Activated CD4-positive, alpha-beta T cell treated with anti-CD3 and anti-CD28 coated beads for 36 hours (primary cell): ENCODE measurements at regions of chr3 and their contacts with region 1.

Region 1: DNA sequence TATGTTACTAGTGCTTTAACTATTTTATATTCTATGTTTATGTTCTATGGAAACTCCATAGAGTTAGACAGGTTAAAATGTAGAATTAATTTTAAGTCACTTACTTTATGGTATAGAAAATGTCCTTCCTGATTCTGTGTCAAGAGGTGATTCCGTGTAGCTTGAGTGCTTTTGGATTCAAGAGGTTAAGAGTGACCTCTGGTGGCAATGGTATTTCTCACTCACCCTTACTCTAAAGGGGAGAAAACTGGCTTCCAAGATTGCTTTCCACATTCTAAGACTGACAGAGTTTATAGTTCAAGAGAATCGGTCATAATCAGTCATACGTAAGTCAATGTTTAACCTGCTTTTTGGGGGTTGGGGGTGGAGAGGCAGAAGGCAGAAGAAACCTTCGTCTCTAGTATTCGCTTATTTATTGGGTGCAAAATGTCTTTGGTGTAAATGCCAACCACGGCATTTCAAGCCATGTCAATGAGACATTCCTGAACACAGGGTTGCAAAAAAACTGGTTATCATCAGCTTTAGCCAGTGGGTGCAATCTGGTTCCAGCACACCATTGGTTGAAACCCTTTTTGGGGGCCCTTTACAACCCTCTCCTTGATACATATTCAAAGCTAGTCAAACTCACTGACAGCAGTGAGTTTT is 92.0 kb upstream of the VGLL3 start:
- DNase-seq: no peak
- ATAC-seq: no peak
- H3K4me3 Mint-ChIP-seq: no peak overlapping the region
- H3K27ac Mint-ChIP-seq: no peak overlapping the region
- H3K4me1 Mint-ChIP-seq: peaks cover 4% of the 10 kb centered on the region
- H3K27me3 Mint-ChIP-seq: no peaks in the 10 kb centered on the region

Region 2: GRCh38 chr3:86702381-86702958 is 380.4 kb before region 1 on chr3:
- CTCF ChIA-PET with region 1: no interaction called
- POLR2A ChIA-PET with region 1: no interaction called
- intact Hi-C with region 1: loop called in 1 of 2 experiments (anchors 5 kb)
- DNase-seq: no peak
- ATAC-seq: no peak
- H3K4me3 Mint-ChIP-seq: no peak overlapping the region
- H3K27ac Mint-ChIP-seq: no peak overlapping the region
- H3K4me1 Mint-ChIP-seq: no peaks in the 10 kb centered on the region
- H3K27me3 Mint-ChIP-seq: no peaks in the 10 kb centered on the region

Region 3: DNA sequence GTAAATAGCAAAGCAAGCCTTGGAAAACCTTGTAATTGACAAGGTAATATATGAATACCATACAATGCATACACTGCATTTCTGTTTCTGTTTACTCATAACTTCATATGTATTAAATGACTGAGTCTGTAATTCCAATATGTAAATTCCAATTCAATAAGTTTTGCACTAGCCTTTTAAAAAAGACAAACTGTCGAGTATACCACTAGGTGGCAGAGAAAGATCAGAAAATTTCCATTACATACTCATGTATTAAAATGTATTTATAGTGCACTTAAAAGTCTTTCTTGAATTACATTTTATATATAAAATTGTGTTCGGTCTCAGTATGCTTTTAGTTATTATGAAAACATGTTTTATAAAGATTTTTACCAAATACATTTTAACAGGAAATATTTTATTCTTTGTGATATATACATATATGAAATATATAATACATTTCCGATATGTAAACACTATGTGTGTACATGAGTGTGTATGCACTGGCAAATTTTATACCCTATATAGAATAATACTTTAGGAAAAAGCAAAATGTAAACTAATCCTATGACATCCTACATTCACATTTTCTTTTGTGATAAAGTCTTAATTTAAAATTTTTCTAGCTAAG is 308.7 kb before region 1 on chr3:
- CTCF ChIA-PET with region 1: interaction called, 3 read pairs
- POLR2A ChIA-PET with region 1: no interaction called
- intact Hi-C with region 1: loop called (anchors 2 to 5 kb)
- DNase-seq: no peak
- ATAC-seq: no peak
- H3K4me3 Mint-ChIP-seq: no peak overlapping the region
- H3K27ac Mint-ChIP-seq: no peak overlapping the region
- H3K4me1 Mint-ChIP-seq: no peaks in the 10 kb centered on the region
- H3K27me3 Mint-ChIP-seq: no peaks in the 10 kb centered on the region

Region 4: GRCh38 chr3:86969500-86970189 is 113.3 kb before region 1 on chr3:
- CTCF ChIA-PET with region 1: no interaction called
- POLR2A ChIA-PET with region 1: interaction called, 3 read pairs
- intact Hi-C with region 1: loop called in 1 of 2 experiments (anchors 1 kb)
- DNase-seq: peak; percentile 53
- ATAC-seq: no peak
- H3K4me3 Mint-ChIP-seq: no peak overlapping the region
- H3K27ac Mint-ChIP-seq: no peak overlapping the region
- H3K4me1 Mint-ChIP-seq: no peaks in the 10 kb centered on the region
- H3K27me3 Mint-ChIP-seq: no peaks in the 10 kb centered on the region

Region 5: DNA sequence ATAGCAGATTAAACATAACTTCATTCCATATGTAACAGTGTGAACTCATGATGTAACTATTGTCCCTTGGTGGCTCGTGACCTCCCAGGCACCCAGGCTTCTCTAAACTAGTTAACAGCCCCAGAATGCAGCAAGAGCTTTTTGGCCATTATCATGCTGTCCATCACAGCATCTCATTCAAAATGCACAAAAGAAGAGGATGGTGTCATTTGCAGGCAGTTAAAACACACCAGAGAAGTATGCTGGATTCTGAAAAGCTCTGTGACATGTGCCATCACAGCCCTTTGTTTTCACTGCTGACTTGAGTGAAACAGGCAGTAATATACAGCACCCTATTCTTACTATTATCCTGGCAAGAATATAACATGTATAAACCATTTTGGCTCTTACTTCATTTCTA is 26.5 kb after region 1 on chr3:
- CTCF ChIA-PET with region 1: no interaction called
- POLR2A ChIA-PET with region 1: no interaction called
- intact Hi-C with region 1: no loop called
- DNase-seq: no peak
- ATAC-seq: no peak
- H3K4me3 Mint-ChIP-seq: no peak overlapping the region
- H3K27ac Mint-ChIP-seq: no peak overlapping the region
- H3K4me1 Mint-ChIP-seq: no peaks in the 10 kb centered on the region
- H3K27me3 Mint-ChIP-seq: peaks cover 1% of the 10 kb centered on the region

Region 6: GRCh38 chr3:87132801-87133200 is 49.9 kb after region 1 on chr3:
- CTCF ChIA-PET with region 1: no interaction called
- POLR2A ChIA-PET with region 1: no interaction called
- intact Hi-C with region 1: no loop called
- DNase-seq: no peak
- ATAC-seq: no peak
- H3K4me3 Mint-ChIP-seq: no peak overlapping the region
- H3K27ac Mint-ChIP-seq: no peak overlapping the region
- H3K4me1 Mint-ChIP-seq: no peaks in the 10 kb centered on the region
- H3K27me3 Mint-ChIP-seq: no peaks in the 10 kb centered on the region